Naive thymus-derived CD4-positive, alpha-beta T cell (primary cell): ENCODE measurements at regions of chr3 and their contacts with region 1.

Region 1: DNA sequence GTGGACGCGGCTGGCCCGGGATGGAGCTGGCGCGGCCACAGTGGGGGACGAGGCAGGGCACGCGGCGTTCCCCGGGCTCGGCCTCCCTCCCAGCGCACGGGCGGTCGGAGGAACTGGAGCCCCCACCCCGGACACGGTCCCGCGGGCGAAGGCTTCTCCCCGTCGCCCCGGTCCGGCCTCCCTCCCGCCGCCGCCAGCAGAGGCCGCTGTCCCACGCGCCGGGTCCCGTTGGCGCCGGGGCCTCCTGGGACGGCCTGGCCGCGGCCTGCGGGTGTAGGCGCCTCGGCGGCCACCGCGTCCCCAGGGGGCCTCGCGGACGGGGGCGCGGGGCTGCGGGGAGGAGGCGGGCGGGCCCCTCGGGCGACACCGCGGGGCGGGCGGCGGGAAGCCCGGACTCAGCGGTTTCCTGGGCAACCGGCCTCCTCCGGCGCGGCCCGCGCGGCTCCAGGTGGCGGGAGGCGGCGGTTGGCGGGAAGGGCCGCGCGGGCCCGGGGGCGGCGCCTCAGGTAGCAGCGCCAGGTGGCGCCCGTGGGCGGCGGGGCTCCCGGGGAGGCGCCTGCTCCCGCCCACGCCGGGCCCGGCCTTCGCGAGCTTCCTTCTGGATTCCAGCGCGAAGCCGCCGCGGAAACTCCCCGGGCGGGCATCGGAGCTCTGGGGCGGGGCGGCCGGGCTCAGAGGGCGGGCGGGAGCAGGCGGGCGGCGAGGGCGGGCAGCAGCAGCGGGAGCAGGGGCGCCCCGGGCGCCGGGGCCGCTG is 26.7 kb downstream of the MELTF start:
- DNase-seq: peak; percentile 60 to 91 (median 77)
- ATAC-seq: peak; percentile 87
- H3K4me3 ChIP-seq: peak overlapping the region; percentile 33
- H3K4me3 Mint-ChIP-seq: peak overlapping the region in 4 of 10 donors; percentile 70 to 80 (median 80)
- H3K27ac ChIP-seq: peak overlapping the region; percentile 57
- H3K27ac Mint-ChIP-seq: peak overlapping the region in 3 of 9 donors; percentile 58 to 74 (median 62)
- H3K4me1 ChIP-seq: peaks cover 8% of the 10 kb centered on the region in 2 donors
- H3K4me1 Mint-ChIP-seq: peaks cover 4 to 19% (median 13%) of the 10 kb centered on the region in 7 donors
- H3K27me3 ChIP-seq: no peaks in the 10 kb centered on the region
- H3K27me3 Mint-ChIP-seq: peaks cover 0 to 2% (median 0%) of the 10 kb centered on the region in 5 donors

Region 2: DNA sequence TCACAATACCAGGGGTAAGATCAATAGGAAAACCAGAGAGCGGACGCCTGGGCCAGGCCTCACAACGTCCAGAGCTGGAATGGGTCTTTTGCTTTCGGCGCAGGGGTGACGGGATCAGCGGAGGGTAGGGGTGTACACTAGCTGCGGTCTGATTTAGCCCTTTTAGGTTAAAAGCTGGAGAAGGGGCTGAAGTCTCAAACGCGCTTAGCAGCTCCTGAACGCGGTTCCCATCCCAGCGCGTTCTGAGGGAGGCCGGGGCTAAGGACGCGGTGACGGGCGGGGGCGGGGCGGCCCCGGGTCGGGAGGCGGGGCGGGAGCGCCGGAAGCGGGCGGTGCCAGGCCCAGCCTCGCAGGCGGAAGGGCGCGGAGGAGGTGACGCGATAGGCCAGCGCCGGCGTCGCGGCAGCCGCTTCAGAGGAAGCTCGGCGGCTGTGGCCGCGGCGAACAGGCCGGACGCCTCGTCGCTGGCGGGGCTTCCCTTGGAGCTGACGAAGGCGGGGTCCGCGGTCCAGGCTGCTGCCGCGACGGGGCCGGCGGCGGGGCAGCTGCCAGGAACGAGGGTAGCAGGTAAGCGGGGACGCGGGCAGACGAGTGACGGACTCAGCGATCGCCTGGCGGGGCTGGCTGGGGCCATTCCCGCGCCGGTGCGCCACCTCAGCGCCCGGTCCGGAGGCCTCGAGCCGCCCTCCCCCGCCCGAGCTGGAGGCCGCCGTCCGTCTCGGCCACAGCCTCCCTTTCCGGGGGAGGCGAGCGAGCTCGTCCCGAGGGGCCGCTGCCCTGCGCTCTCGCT is 135.2 kb before region 1 on chr3 and contains the start of gene SENP5:
- CTCF ChIA-PET with region 1: interaction called, 3 read pairs
- POLR2A ChIA-PET with region 1: no interaction called
- intact Hi-C with region 1: loop called in 1 of 2 experiments (anchors 1 kb)
- DNase-seq: peak; percentile 79 to 92 (median 87)
- ATAC-seq: peak; percentile 99
- H3K4me3 ChIP-seq: peak within 1 kb of the TSS; percentile 86
- H3K4me3 Mint-ChIP-seq: peak within 1 kb of the TSS; percentile 90 to 99 (median 97)
- H3K27ac ChIP-seq: peak within 1 kb of the TSS; percentile 98
- H3K27ac Mint-ChIP-seq: peak within 1 kb of the TSS; percentile 90 to 99 (median 95)
- H3K4me1 ChIP-seq: peaks cover 13 to 16% of the 10 kb centered on the region in 2 donors
- H3K4me1 Mint-ChIP-seq: peaks cover 9 to 42% (median 34%) of the 10 kb centered on the region in 7 donors
- H3K27me3 ChIP-seq: no peaks in the 10 kb centered on the region
- H3K27me3 Mint-ChIP-seq: no peaks in the 10 kb centered on the region
- total RNA-seq, gene SENP5: 40.6 to 59.4 (median 43.1) TPM

Region 3: DNA sequence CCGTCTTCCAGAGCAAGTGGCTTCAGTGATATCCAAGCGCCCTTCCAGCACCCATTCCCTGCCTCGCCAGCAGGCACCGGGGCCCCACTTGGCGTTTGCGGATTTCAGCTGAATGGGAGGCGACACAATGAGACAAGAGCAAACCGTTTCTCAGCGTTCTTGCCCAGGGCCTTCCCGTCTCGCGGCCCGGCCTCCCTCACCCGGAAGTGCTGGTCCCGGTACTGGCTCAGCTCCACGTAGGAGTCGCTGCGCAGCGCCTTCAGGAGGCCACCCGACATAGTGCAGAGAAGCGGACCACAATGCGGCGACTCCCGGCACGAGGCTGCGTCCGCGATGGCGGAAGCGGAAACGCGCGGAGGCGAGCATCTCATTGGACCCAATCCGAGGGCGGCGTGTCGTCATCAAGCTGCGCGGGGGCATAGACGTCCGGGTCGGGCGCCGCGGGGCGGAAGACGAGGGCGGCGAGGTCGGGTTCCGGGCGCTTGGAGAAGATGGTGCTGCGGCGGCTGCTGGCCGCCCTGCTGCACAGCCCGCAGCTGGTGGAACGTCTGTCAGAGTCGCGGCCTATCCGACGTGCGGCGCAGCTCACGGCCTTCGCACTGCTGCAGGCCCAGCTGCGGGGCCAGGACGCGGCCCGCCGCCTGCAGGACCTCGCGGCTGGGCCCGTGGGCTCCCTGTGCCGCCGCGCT is 60.5 kb before region 1 on chr3 and contains the start of gene NCBP2:
- CTCF ChIA-PET with region 1: no interaction called
- POLR2A ChIA-PET with region 1: no interaction called
- intact Hi-C with region 1: loop called in 1 of 2 experiments (anchors 2 kb)
- DNase-seq: peak; percentile 98 to 100 (median 99)
- ATAC-seq: peak; percentile 97
- H3K4me3 ChIP-seq: peak within 1 kb of the TSS; percentile 100
- H3K4me3 Mint-ChIP-seq: peak within 1 kb of the TSS; percentile 94 to 99 (median 98)
- H3K27ac ChIP-seq: peak within 1 kb of the TSS; percentile 94
- H3K27ac Mint-ChIP-seq: peak within 1 kb of the TSS; percentile 96 to 100 (median 98)
- H3K4me1 ChIP-seq: peaks cover 16 to 20% of the 10 kb centered on the region in 2 donors
- H3K4me1 Mint-ChIP-seq: peaks cover 30 to 64% (median 49%) of the 10 kb centered on the region in 7 donors
- H3K27me3 ChIP-seq: no peaks in the 10 kb centered on the region
- H3K27me3 Mint-ChIP-seq: peaks cover 0 to 5% (median 0%) of the 10 kb centered on the region in 5 donors
- total RNA-seq, gene NCBP2: 42.9 to 77.3 (median 67.5) TPM

Region 4: GRCh38 chr3:196969660-196970546 is 33.0 kb before region 1 on chr3:
- CTCF ChIA-PET with region 1: no interaction called
- POLR2A ChIA-PET with region 1: no interaction called
- intact Hi-C with region 1: loop called in 1 of 2 experiments (anchors 2 kb)
- DNase-seq: peak; percentile 43 to 89 (median 66)
- ATAC-seq: peak; percentile 88
- H3K4me3 ChIP-seq: peak overlapping the region; percentile 48
- H3K4me3 Mint-ChIP-seq: peak overlapping the region; percentile 63 to 88 (median 82)
- H3K27ac ChIP-seq: no peak overlapping the region
- H3K27ac Mint-ChIP-seq: peak overlapping the region in 3 of 9 donors; percentile 32 to 53 (median 44)
- H3K4me1 ChIP-seq: no peaks in the 10 kb centered on the region
- H3K4me1 Mint-ChIP-seq: peaks cover 0 to 14% (median 6%) of the 10 kb centered on the region in 7 donors
- H3K27me3 ChIP-seq: no peaks in the 10 kb centered on the region
- H3K27me3 Mint-ChIP-seq: peaks cover 0 to 12% (median 4%) of the 10 kb centered on the region in 5 donors

Region 5: GRCh38 chr3:197029511-197030167 is 26.8 kb after region 1 on chr3 and contains the start of gene MELTF:
- CTCF ChIA-PET with region 1: interaction called, 6 read pairs
- POLR2A ChIA-PET with region 1: interaction called, 4 read pairs
- intact Hi-C with region 1: loop called (anchors 1 kb)
- DNase-seq: peak; percentile 46 to 90 (median 75)
- ATAC-seq: peak; percentile 90
- H3K4me3 ChIP-seq: peak within 1 kb of the TSS; percentile 51
- H3K4me3 Mint-ChIP-seq: peak within 1 kb of the TSS; percentile 64 to 83 (median 78)
- H3K27ac ChIP-seq: peak within 1 kb of the TSS; percentile 24
- H3K27ac Mint-ChIP-seq: peak within 1 kb of the TSS in 3 of 9 donors; percentile 42 to 76 (median 45)
- H3K4me1 ChIP-seq: peaks cover 0 to 4% of the 10 kb centered on the region in 2 donors
- H3K4me1 Mint-ChIP-seq: peaks cover 0 to 19% (median under 1%) of the 10 kb centered on the region in 7 donors
- H3K27me3 ChIP-seq: peaks cover 0 to 3% of the 10 kb centered on the region in 2 donors
- H3K27me3 Mint-ChIP-seq: no peaks in the 10 kb centered on the region
- total RNA-seq, gene MELTF: 0.51 to 7.6 (median 2.7) TPM

Region 6: DNA sequence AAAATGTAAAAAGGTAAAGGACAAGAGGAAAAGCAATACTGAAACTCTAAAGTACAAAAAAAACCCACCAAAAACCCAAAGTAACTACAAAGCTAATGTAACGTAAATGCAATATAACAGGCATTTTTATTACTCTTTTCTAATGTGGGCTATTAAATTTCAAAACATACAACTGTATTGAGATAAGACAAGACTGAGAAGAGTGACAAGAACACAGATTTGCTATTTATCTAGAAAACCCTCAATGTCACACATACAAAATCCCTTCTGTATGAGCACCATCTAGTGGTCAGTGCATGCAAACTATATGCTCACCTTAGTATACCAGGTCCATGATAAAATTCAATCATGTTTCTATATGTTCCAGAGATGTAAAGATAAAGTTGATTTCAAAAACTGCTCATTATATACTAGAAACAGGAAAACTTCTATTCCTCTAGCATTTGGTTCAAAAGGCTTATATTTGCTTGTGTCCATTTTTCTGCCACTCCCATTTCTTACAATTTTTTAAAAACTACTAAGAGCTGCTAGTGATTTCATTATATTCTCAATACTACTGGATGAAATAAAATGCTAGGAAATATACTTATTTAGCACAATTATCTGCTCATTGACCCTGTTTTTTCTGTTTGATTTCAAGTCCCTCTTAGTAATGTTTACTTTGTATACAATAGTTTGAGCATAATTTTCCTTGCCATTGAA is 184.2 kb after region 1 on chr3:
- CTCF ChIA-PET with region 1: interaction called, 3 read pairs
- POLR2A ChIA-PET with region 1: no interaction called
- intact Hi-C with region 1: loop called (anchors 1 kb)
- DNase-seq: peak in 7 of 9 donors; percentile 7 to 56 (median 43)
- ATAC-seq: peak; percentile 87
- H3K4me3 ChIP-seq: no peak overlapping the region
- H3K4me3 Mint-ChIP-seq: no peak overlapping the region
- H3K27ac ChIP-seq: no peak overlapping the region
- H3K27ac Mint-ChIP-seq: no peak overlapping the region
- H3K4me1 ChIP-seq: no peaks in the 10 kb centered on the region
- H3K4me1 Mint-ChIP-seq: peaks cover 4 to 24% (median 14%) of the 10 kb centered on the region in 7 donors
- H3K27me3 ChIP-seq: no peaks in the 10 kb centered on the region
- H3K27me3 Mint-ChIP-seq: no peaks in the 10 kb centered on the region

Region 7: GRCh38 chr3:197511130-197511529 is 508.3 kb after region 1 on chr3:
- CTCF ChIA-PET with region 1: no interaction called
- POLR2A ChIA-PET with region 1: no interaction called
- intact Hi-C with region 1: loop called in 1 of 2 experiments (anchors 1 kb)
- DNase-seq: no peak
- ATAC-seq: no peak
- H3K4me3 ChIP-seq: no peak overlapping the region
- H3K4me3 Mint-ChIP-seq: no peak overlapping the region
- H3K27ac ChIP-seq: no peak overlapping the region
- H3K27ac Mint-ChIP-seq: no peak overlapping the region
- H3K4me1 ChIP-seq: no peaks in the 10 kb centered on the region
- H3K4me1 Mint-ChIP-seq: peaks cover 0 to 10% (median 9%) of the 10 kb centered on the region in 7 donors
- H3K27me3 ChIP-seq: no peaks in the 10 kb centered on the region
- H3K27me3 Mint-ChIP-seq: no peaks in the 10 kb centered on the region

Region 8: GRCh38 chr3:197525706-197526105 is 522.8 kb after region 1 on chr3:
- CTCF ChIA-PET with region 1: no interaction called
- POLR2A ChIA-PET with region 1: no interaction called
- intact Hi-C with region 1: no loop called
- DNase-seq: no peak
- ATAC-seq: no peak
- H3K4me3 ChIP-seq: no peak overlapping the region
- H3K4me3 Mint-ChIP-seq: no peak overlapping the region
- H3K27ac ChIP-seq: no peak overlapping the region
- H3K27ac Mint-ChIP-seq: peak overlapping the region in 1 of 9 donors; percentile 66
- H3K4me1 ChIP-seq: no peaks in the 10 kb centered on the region
- H3K4me1 Mint-ChIP-seq: peaks cover 0 to 11% (median 0%) of the 10 kb centered on the region in 7 donors
- H3K27me3 ChIP-seq: no peaks in the 10 kb centered on the region
- H3K27me3 Mint-ChIP-seq: no peaks in the 10 kb centered on the region